ENCODE measurements at regions of chr4 and their contacts with region 1.

Region 1: DNA sequence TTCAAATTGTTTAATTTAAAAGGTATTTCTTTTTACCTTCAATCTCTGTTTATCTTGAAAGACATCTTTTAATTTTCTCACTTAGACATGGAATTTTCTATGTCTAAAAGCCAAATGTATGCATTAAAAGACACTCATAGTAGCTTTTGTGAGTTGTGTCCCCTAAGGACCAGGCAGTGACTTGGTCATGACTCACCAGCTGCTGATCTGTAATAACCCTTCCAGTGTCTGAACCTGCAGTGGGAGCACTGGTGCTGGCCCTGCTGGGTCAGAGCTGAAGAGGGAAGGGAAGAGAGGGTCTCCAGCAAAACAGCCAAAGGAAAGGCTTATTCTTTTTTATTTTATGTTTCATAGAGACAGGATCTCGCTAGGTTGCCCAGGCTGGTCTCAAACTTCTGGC is 31.1 kb upstream of the SH3D19 start:
- DNase-seq: peak; percentile 18
- ATAC-seq: no peak
- H3K4me3 ChIP-seq: no peak overlapping the region
- H3K27ac ChIP-seq: no peak overlapping the region
- H3K4me1 ChIP-seq: no peaks in the 10 kb centered on the region
- H3K27me3 ChIP-seq: peaks cover 6% of the 10 kb centered on the region; the same call in 1 of the 2 replicates
- CTCF ChIP-seq: no peak
- POLR2A ChIP-seq: no peak
- RAD21 ChIP-seq: no peak

Region 2: GRCh38 chr4:151129801-151130200 is 226.7 kb before region 1 on chr4:
- CTCF ChIA-PET with region 1: no interaction called
- POLR2A ChIA-PET with region 1: no interaction called
- dilution Hi-C with region 1: no loop called
- in situ Hi-C with region 1: loop called (anchors 10 kb)
- intact Hi-C with region 1: no loop called
- DNase-seq: peak; percentile 17
- ATAC-seq: no peak
- H3K4me3 ChIP-seq: no peak overlapping the region
- H3K27ac ChIP-seq: no peak overlapping the region
- H3K4me1 ChIP-seq: peaks cover 3% of the 10 kb centered on the region; the same call in 1 of the 2 replicates
- H3K27me3 ChIP-seq: no peaks in the 10 kb centered on the region
- CTCF ChIP-seq: no peak
- POLR2A ChIP-seq: no peak
- RAD21 ChIP-seq: no peak

Measured in IMR-90 (cell line).